ENCODE measurements at regions of chr14 and their contacts with region 1.

Region 1: DNA sequence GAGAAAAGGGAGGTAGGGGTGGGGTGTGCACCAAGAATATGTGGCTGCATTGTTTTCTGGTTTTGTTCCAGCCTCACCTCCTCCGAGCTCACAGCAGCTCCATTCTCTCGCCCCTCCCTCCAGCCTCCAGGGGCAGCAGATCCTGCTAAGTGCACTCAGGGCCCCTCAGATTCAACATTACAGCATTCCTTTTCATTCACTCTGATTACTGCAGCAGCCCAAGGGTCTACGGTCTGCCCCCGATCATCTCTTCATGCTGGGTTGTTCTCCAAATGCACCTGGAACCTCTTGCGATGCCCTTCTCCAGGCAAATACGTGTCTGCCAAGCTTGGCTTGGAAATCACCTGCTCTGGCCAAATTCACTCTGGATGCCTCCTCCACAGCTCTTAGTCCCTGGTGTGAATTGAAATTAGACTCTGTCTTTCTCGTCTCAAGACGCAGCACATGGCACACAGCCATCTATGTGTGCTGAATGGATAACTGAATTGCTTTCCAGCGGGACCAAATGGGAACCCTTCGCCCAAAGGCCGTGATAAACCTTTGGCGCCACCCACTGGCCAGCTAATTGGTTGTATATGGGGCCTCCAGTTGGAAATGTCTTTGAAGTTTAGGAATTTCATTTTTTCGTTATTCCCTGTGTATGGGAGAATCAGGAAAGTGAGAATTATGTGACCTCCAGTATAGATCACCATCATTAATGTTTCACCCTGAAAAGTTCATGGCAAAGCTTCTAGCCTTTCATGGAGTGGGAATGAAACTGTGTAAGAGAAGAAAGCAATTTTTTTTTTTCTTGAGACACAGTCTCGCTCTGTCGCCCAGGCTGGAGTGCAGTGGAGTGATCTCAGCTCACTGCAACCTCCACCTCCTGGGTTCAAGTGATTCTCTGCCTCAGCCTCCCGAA is 9.6 kb upstream of the HSP90AA1 start:
- DNase-seq: peak; percentile 82
- H3K4me3 Mint-ChIP-seq: no peak overlapping the region
- H3K27ac Mint-ChIP-seq: no peak overlapping the region
- H3K4me1 Mint-ChIP-seq: peaks cover 5% of the 10 kb centered on the region
- H3K27me3 Mint-ChIP-seq: no peaks in the 10 kb centered on the region

Region 2: GRCh38 chr14:101927859-101928258 is 168.6 kb before region 1 on chr14:
- CTCF ChIA-PET with region 1: no interaction called
- DNase-seq: no peak
- H3K4me3 Mint-ChIP-seq: no peak overlapping the region
- H3K27ac Mint-ChIP-seq: no peak overlapping the region
- H3K4me1 Mint-ChIP-seq: no peaks in the 10 kb centered on the region
- H3K27me3 Mint-ChIP-seq: no peaks in the 10 kb centered on the region

Region 3: GRCh38 chr14:102063091-102063802 is 33.2 kb before region 1 on chr14:
- CTCF ChIA-PET with region 1: interaction called, 23 read pairs
- DNase-seq: peak; percentile 83
- H3K4me3 Mint-ChIP-seq: no peak overlapping the region
- H3K27ac Mint-ChIP-seq: no peak overlapping the region
- H3K4me1 Mint-ChIP-seq: peaks cover 5% of the 10 kb centered on the region
- H3K27me3 Mint-ChIP-seq: peaks cover 17% of the 10 kb centered on the region

Region 4: GRCh38 chr14:102171177-102172020 is 74.9 kb after region 1 on chr14:
- CTCF ChIA-PET with region 1: no interaction called
- DNase-seq: no peak
- H3K4me3 Mint-ChIP-seq: no peak overlapping the region
- H3K27ac Mint-ChIP-seq: no peak overlapping the region
- H3K4me1 Mint-ChIP-seq: peaks cover 3% of the 10 kb centered on the region
- H3K27me3 Mint-ChIP-seq: no peaks in the 10 kb centered on the region

Region 5: DNA sequence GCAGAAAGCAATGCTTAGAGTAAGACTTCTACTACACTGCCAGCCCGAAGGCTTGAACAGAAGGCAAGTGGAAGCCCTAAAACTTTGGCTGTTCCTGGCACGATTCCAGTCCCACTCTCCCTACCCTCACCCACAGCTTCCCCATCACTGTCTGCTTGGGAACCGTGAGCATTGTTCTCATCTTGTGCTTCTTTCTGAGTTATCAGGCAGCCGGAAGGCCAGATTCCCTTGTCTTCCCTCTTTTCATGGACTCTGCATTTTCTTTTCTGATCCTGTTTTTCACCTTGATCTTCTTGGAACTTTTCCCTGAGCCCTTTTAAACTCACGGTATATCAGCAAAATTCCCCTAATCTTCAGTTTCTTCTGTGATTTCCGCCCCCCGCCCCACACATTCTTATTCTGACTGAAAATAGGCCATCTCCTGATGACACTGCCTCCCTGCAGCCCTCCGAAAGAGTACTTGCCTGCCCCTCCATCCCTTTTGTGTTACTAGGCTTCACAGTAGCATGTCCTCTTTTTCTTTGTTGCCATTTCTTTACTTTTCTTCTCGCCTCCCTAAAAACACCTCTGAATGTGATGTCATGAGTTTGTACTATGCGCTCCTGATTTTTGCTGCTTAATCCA is 525.9 kb after region 1 on chr14:
- CTCF ChIA-PET with region 1: no interaction called
- DNase-seq: no peak
- H3K4me3 Mint-ChIP-seq: no peak overlapping the region
- H3K27ac Mint-ChIP-seq: no peak overlapping the region
- H3K4me1 Mint-ChIP-seq: peaks cover 15% of the 10 kb centered on the region
- H3K27me3 Mint-ChIP-seq: no peaks in the 10 kb centered on the region